ENCODE measurements at regions of chr7 and their contacts with region 1.

Region 1: GRCh38 chr7:23654508-23654907 is 25.5 kb upstream of the FAM221A start:
- DNase-seq: no peak
- H3K4me3 ChIP-seq: no peak overlapping the region
- H3K27ac ChIP-seq: no peak overlapping the region
- H3K4me1 ChIP-seq: no peaks in the 10 kb centered on the region
- H3K27me3 ChIP-seq: no peaks in the 10 kb centered on the region
- CTCF ChIP-seq: peak; percentile 31 to 40

Region 2: GRCh38 chr7:23597094-23598091 is 57.1 kb before region 1 on chr7 and contains the start of gene CCDC126:
- CTCF ChIA-PET with region 1: no interaction called
- dilution Hi-C with region 1: loop called (anchors 5 kb)
- in situ Hi-C with region 1: no loop called
- intact Hi-C with region 1: no loop called
- DNase-seq: peak; percentile 88
- H3K4me3 ChIP-seq: peak within 1 kb of the TSS; percentile 60 to 83 (median 78)
- H3K27ac ChIP-seq: peak within 1 kb of the TSS; percentile 55
- H3K4me1 ChIP-seq: peaks cover 20% of the 10 kb centered on the region
- H3K27me3 ChIP-seq: no peaks in the 10 kb centered on the region
- CTCF ChIP-seq: no peak
- total RNA-seq, gene CCDC126: 6.8 to 21.7 TPM

Region 3: GRCh38 chr7:23712368-23713284 is 58.1 kb after region 1 on chr7:
- CTCF ChIA-PET with region 1: no interaction called
- dilution Hi-C with region 1: no loop called
- in situ Hi-C with region 1: no loop called
- intact Hi-C with region 1: loop called (anchors 2 kb)
- DNase-seq: peak; percentile 60
- H3K4me3 ChIP-seq: no peak overlapping the region
- H3K27ac ChIP-seq: no peak overlapping the region
- H3K4me1 ChIP-seq: peaks cover 20% of the 10 kb centered on the region
- H3K27me3 ChIP-seq: no peaks in the 10 kb centered on the region
- CTCF ChIP-seq: peak; percentile 35 to 46

Measured in mammary epithelial cell (primary cell).